PC-3 (cell line): ENCODE measurements at regions of chrX and their contacts with region 1.

Region 1: GRCh38 chrX:24215272-24215671 is 65.7 kb downstream of the ZFX start:
- DNase-seq: no peak
- ATAC-seq: no peak
- H3K4me3 ChIP-seq: no peak overlapping the region
- H3K27ac ChIP-seq: no peak overlapping the region
- H3K4me1 ChIP-seq: no peaks in the 10 kb centered on the region
- H3K27me3 ChIP-seq: no peaks in the 10 kb centered on the region
- CTCF ChIP-seq: no peak

Region 2: GRCh38 chrX:24169211-24169610 is 46.1 kb before region 1 on chrX:
- CTCF ChIA-PET with region 1: no interaction called
- POLR2A ChIA-PET with region 1: no interaction called
- intact Hi-C with region 1: loop called (anchors 10 kb)
- DNase-seq: no peak
- ATAC-seq: no peak
- H3K4me3 ChIP-seq: no peak overlapping the region
- H3K27ac ChIP-seq: no peak overlapping the region
- H3K4me1 ChIP-seq: no peaks in the 10 kb centered on the region
- H3K27me3 ChIP-seq: no peaks in the 10 kb centered on the region
- CTCF ChIP-seq: no peak